Posterior vena cava (tissue), 2 donors: ENCODE measurements at regions of chr3 and their contacts with region 1.

Region 1: DNA sequence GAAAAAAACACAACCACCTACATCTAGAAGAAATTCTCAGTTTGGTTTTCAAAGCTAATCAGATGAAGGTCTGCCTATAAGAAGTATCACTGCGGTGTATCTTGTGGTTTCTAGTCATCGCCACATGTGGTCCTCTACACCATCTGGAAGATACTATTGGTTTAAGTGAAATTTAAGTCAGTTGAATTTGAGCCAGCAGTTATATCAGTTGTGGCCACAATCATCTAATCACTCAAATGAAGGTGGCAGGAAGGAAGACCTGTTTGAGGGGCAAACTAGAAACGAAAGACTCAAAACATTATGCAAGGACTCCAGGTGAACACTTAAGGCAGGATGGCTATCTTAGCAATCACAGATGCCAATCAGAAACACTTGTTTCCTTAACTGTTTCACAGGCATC is 48.7 kb downstream of the ETV5 start:
- DNase-seq: no peak

Region 2: GRCh38 chr3:186025161-186025560 is 35.1 kb before region 1 on chr3:
- intact Hi-C with region 1: loop called in 1 of 2 experiments (anchors 1 kb)
- DNase-seq: no peak

Region 3: GRCh38 chr3:186247821-186248814 is 187.9 kb after region 1 on chr3:
- intact Hi-C with region 1: no loop called
- DNase-seq: no peak